GM10248 (cell line): ENCODE measurements at regions of chr19 and their contacts with region 1.

Region 1: GRCh38 chr19:46704379-46705076 is 12.4 kb downstream of the PRKD2 start:
- DNase-seq: peak; percentile 92
- CTCF ChIP-seq: peak; percentile 90

Region 2: GRCh38 chr19:46546194-46546896 is 158.2 kb before region 1 on chr19:
- CTCF ChIA-PET with region 1: no interaction called
- POLR2A ChIA-PET with region 1: no interaction called
- DNase-seq: peak; percentile 46
- CTCF ChIP-seq: no peak

Region 3: GRCh38 chr19:46678110-46678732 is 26.3 kb before region 1 on chr19:
- CTCF ChIA-PET with region 1: interaction called, 21 read pairs
- POLR2A ChIA-PET with region 1: no interaction called
- DNase-seq: peak; percentile 73
- CTCF ChIP-seq: no peak

Region 4: GRCh38 chr19:46691104-46691503 is 13.4 kb before region 1 on chr19:
- CTCF ChIA-PET with region 1: interaction called, 39 read pairs
- POLR2A ChIA-PET with region 1: no interaction called
- DNase-seq: no peak
- CTCF ChIP-seq: no peak

Region 5: GRCh38 chr19:46717034-46717723 is 12.7 kb after region 1 on chr19 and contains the start of gene PRKD2:
- CTCF ChIA-PET with region 1: interaction called, 56 read pairs
- POLR2A ChIA-PET with region 1: interaction called, 4 read pairs
- DNase-seq: peak; percentile 96
- CTCF ChIP-seq: no peak

Region 6: GRCh38 chr19:46890423-46891170 is 186.1 kb after region 1 on chr19:
- CTCF ChIA-PET with region 1: no interaction called
- POLR2A ChIA-PET with region 1: no interaction called
- DNase-seq: no peak
- CTCF ChIP-seq: no peak